Activated CD8-positive, alpha-beta T cell treated with anti-CD3 and anti-CD28 coated beads for 36 hours (primary cell): ENCODE measurements at regions of chr11 and their contacts with region 1.

Region 1: GRCh38 chr11:73995247-73995646 is 12.6 kb upstream of the UCP2 start:
- DNase-seq: no peak
- ATAC-seq: peak; percentile 76
- H3K4me3 Mint-ChIP-seq: peak overlapping the region; percentile 74
- H3K27ac Mint-ChIP-seq: peak overlapping the region; percentile 99
- H3K4me1 Mint-ChIP-seq: peaks cover 77% of the 10 kb centered on the region
- H3K27me3 Mint-ChIP-seq: no peaks in the 10 kb centered on the region
- CTCF ChIP-seq: no peak

Region 2: DNA sequence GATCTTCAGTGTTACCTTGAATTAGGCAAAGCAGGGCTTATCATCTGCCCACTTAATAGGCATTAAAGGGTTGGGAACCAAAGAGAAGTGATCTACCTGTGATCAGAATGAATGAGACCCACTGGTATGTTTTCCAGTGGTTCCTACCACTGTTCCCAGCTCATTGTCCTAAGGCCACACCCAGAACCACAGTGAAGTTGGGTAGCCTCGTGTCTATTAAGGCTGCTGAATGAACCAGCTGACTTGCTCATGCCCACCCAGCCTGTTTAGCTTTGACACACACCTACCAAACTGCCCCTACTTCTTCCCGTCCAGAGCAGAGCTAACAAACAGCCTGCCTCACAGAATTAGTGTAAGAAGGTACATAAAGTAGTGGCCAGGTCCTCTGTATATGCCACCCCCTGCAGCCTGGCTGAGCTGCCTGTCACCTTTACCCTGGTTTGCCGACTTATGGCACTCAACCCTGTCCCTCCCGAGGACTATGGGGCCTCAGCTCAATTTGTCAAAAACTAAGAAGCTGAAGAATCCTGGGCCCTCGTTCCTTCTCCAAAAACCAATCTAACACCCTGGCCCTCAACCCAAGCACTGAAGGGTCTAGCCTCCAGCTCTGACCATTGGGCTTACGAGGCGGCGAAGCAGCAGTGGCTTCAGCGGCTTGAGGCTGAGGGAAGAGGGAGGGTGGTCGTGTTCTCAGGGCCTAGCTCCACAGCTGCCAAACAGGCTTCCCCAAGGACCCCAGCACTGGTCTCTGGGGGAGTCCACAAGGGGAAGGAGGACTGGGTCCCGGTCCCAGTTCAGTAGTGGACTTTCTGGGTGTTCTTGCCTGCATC is 22.4 kb before region 1 on chr11:
- CTCF ChIA-PET with region 1: no interaction called
- POLR2A ChIA-PET with region 1: interaction called, 176 read pairs
- intact Hi-C with region 1: no loop called
- DNase-seq: no peak
- ATAC-seq: no peak
- H3K4me3 Mint-ChIP-seq: no peak overlapping the region
- H3K27ac Mint-ChIP-seq: peak overlapping the region; percentile 84
- H3K4me1 Mint-ChIP-seq: peaks cover 88% of the 10 kb centered on the region
- H3K27me3 Mint-ChIP-seq: no peaks in the 10 kb centered on the region
- CTCF ChIP-seq: no peak

Region 3: GRCh38 chr11:74011360-74012073 is 16.3 kb after region 1 on chr11:
- CTCF ChIA-PET with region 1: interaction called, 9 read pairs
- POLR2A ChIA-PET with region 1: interaction called, 14 read pairs
- intact Hi-C with region 1: no loop called
- DNase-seq: peak; percentile 76
- ATAC-seq: peak; percentile 81
- H3K4me3 Mint-ChIP-seq: peak overlapping the region; percentile 17
- H3K27ac Mint-ChIP-seq: peak overlapping the region; percentile 98
- H3K4me1 Mint-ChIP-seq: peaks cover 92% of the 10 kb centered on the region
- H3K27me3 Mint-ChIP-seq: no peaks in the 10 kb centered on the region
- CTCF ChIP-seq: no peak

Region 4: DNA sequence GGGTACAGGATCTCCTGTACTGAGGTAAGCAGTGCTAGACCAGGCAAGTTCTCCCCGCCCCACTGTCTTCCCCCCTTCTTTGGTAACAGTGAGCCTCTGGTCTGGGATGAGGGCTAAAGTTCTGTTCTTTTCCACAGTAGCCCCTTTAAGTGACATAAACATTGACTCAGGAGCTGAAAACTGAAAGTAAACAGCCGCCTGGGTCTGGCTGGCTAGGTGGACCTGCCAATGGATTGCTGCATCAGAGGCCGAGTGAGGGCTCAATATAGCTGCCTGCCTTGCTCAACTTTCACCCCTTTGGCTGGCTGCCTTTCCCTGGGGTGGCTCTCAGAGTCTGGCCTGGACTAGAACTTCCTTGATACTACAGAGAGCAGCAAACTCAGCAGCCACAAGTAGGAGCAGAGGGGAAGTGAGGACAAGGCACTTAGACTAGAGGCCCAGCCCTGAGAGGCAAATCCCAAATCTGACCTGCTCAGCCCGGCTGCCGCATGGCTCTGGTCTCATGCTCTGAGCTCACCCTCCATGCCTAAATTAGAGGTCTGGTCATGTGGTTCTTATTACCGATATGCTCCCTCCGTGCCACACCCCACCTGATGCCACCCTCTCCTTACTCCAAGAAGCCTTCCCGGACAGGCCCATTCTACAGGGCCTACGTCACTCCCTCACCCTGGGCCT is 23.2 kb after region 1 on chr11:
- CTCF ChIA-PET with region 1: interaction called, 9 read pairs
- POLR2A ChIA-PET with region 1: interaction called, 11 read pairs
- intact Hi-C with region 1: no loop called
- DNase-seq: no peak
- ATAC-seq: no peak
- H3K4me3 Mint-ChIP-seq: no peak overlapping the region
- H3K27ac Mint-ChIP-seq: no peak overlapping the region
- H3K4me1 Mint-ChIP-seq: peaks cover 34% of the 10 kb centered on the region
- H3K27me3 Mint-ChIP-seq: no peaks in the 10 kb centered on the region
- CTCF ChIP-seq: no peak